CD4-positive, alpha-beta memory T cell (primary cell): ENCODE measurements at regions of chr9 and their contacts with region 1.

Region 1: DNA sequence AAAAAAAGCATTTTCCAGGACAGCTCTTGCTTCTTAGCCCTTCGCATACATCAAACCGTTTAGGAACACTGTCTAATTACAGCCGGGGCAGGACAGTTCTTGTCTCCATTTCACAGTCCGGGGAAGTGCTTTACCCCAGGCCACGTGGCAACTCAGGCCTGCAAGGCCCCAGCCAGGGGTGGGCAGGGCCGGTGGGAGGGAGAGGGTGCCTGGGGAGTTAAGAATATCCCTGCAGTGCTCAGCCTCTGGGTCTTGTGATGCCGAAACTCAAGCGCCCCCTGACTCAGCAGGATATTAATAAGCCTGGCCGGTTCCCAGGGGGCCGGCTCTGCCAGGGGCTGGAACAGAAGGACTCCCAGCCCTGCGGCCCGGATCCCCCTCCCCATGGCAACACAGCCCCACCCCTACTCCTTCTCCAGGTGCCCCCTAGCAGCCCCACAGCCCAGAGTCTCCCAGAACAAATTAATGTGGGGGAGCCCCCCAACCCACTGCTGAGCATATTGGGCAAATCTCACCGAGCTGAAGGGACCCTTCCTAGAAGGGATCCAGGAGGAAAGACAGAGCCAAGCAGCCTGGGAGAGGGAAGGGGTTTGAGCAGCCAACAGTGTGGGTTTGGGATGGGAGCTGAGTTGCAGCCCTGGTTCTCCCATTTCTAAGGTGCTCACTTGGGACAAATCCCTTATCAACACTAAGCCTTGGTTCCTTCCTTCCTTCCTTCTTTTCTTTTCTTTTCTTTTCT is 45.3 kb downstream of the PLPP7 start:
- DNase-seq: no peak
- H3K4me3 ChIP-seq: no peak overlapping the region
- H3K4me3 Mint-ChIP-seq: no peak overlapping the region
- H3K27ac ChIP-seq: no peak overlapping the region
- H3K27ac Mint-ChIP-seq: no peak overlapping the region
- H3K4me1 ChIP-seq: peaks cover 4% of the 10 kb centered on the region
- H3K4me1 Mint-ChIP-seq: peaks cover 3 to 5% (median 4%) of the 10 kb centered on the region in 4 donors
- H3K27me3 ChIP-seq: no peaks in the 10 kb centered on the region
- H3K27me3 Mint-ChIP-seq: no peaks in the 10 kb centered on the region

Region 2: DNA sequence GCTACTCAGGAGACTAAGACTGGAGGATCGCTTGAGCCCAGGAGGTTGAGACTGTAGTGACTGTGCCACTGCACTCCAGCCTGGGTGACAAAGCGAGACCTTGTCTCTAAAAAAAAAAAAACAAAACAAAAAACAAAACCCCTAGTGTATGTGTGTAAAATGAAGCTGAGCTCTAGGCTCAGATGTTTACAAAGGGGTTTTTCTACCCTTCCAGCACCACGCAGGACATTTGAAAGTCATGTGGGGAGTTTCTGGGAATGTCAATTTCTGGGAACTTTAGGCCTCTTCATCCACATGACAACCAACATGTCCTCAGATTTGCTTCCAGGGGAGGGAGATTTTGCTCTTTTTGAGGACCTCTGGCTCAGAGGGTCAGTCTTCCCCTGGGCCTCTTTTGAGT is 280.9 kb before region 1 on chr9:
- CTCF ChIA-PET with region 1: interaction called, 10 read pairs
- POLR2A ChIA-PET with region 1: interaction called, 3 read pairs
- intact Hi-C with region 1: no loop called
- DNase-seq: no peak
- H3K4me3 ChIP-seq: no peak overlapping the region
- H3K4me3 Mint-ChIP-seq: no peak overlapping the region
- H3K27ac ChIP-seq: no peak overlapping the region
- H3K27ac Mint-ChIP-seq: no peak overlapping the region
- H3K4me1 ChIP-seq: no peaks in the 10 kb centered on the region
- H3K4me1 Mint-ChIP-seq: no peaks in the 10 kb centered on the region
- H3K27me3 ChIP-seq: peaks cover 4% of the 10 kb centered on the region
- H3K27me3 Mint-ChIP-seq: peaks cover 3 to 7% of the 10 kb centered on the region in 2 donors

Region 3: GRCh38 chr9:131214286-131214856 is 120.4 kb before region 1 on chr9:
- CTCF ChIA-PET with region 1: interaction called, 12 read pairs
- POLR2A ChIA-PET with region 1: no interaction called
- intact Hi-C with region 1: no loop called
- DNase-seq: no peak
- H3K4me3 ChIP-seq: no peak overlapping the region
- H3K4me3 Mint-ChIP-seq: no peak overlapping the region
- H3K27ac ChIP-seq: no peak overlapping the region
- H3K27ac Mint-ChIP-seq: no peak overlapping the region
- H3K4me1 ChIP-seq: no peaks in the 10 kb centered on the region
- H3K4me1 Mint-ChIP-seq: peaks cover 0 to 4% (median 1%) of the 10 kb centered on the region in 4 donors
- H3K27me3 ChIP-seq: no peaks in the 10 kb centered on the region
- H3K27me3 Mint-ChIP-seq: no peaks in the 10 kb centered on the region

Region 4: GRCh38 chr9:131253891-131254491 is 80.8 kb before region 1 on chr9:
- CTCF ChIA-PET with region 1: interaction called, 14 read pairs
- POLR2A ChIA-PET with region 1: interaction called, 19 read pairs
- intact Hi-C with region 1: no loop called
- DNase-seq: no peak
- H3K4me3 ChIP-seq: no peak overlapping the region
- H3K4me3 Mint-ChIP-seq: peak overlapping the region in 7 of 8 donors; percentile 27 to 91 (median 46)
- H3K27ac ChIP-seq: peak overlapping the region; percentile 77
- H3K27ac Mint-ChIP-seq: peak overlapping the region; percentile 57 to 100 (median 72)
- H3K4me1 ChIP-seq: peaks cover 72% of the 10 kb centered on the region
- H3K4me1 Mint-ChIP-seq: peaks cover 27 to 73% (median 50%) of the 10 kb centered on the region in 4 donors
- H3K27me3 ChIP-seq: no peaks in the 10 kb centered on the region
- H3K27me3 Mint-ChIP-seq: no peaks in the 10 kb centered on the region

Region 5: DNA sequence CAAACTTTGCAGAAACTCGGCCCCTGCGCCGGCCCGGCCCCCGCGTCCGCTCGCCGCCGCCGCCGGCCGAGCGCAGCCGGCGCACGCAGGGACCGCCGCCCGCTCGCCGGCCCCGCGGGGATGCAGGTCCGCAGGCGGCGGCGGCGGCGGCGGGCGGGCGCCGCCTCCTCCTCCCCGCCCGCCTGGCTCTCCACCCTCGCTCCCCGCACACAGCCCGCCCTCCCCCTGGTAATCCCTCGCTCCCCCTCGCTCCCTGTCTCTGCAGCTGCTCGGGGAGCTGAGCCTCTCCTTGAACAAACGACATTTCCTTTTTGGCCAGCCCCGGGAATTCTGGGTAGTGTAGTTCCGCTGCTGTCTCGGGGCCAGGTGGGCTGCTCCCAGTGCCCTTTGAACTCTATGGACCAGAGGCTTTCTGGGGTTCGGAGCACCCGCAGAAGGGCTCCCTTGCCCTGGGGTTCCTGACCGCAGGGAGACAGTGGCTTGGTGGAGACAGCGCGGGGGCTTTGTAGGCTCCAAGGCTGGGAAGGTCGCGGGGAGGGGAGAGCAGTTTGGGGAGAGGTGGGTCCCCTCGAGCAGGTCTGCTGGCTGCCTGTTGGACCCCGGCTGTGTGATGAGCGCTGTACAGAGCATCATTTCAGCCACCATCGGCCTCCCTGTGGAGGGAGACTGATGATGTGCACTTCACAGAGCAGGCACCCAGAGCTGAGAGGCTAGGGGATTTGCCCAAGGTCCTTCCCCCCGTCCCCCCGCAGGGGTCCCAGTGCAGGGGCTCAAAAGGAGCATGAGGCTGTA is 56.7 kb before region 1 on chr9:
- CTCF ChIA-PET with region 1: interaction called, 5 read pairs
- POLR2A ChIA-PET with region 1: no interaction called
- intact Hi-C with region 1: loop called (anchors 5 kb)
- DNase-seq: peak; percentile 60 to 78 (median 61)
- H3K4me3 ChIP-seq: peak overlapping the region; percentile 21 to 65
- H3K4me3 Mint-ChIP-seq: peak overlapping the region; percentile 84 to 93 (median 91)
- H3K27ac ChIP-seq: peak overlapping the region; percentile 79
- H3K27ac Mint-ChIP-seq: peak overlapping the region; percentile 92 to 95 (median 94)
- H3K4me1 ChIP-seq: peaks cover 27% of the 10 kb centered on the region
- H3K4me1 Mint-ChIP-seq: peaks cover 22 to 49% (median 25%) of the 10 kb centered on the region in 4 donors
- H3K27me3 ChIP-seq: no peaks in the 10 kb centered on the region
- H3K27me3 Mint-ChIP-seq: peaks cover 2 to 3% of the 10 kb centered on the region in 2 donors

Region 6: GRCh38 chr9:131349881-131350563 is 15.2 kb after region 1 on chr9:
- CTCF ChIA-PET with region 1: interaction called, 12 read pairs
- POLR2A ChIA-PET with region 1: no interaction called
- intact Hi-C with region 1: no loop called
- DNase-seq: peak; percentile 79 to 82 (median 81)
- H3K4me3 ChIP-seq: no peak overlapping the region
- H3K4me3 Mint-ChIP-seq: peak overlapping the region in 4 of 8 donors; percentile 36 to 63 (median 50)
- H3K27ac ChIP-seq: no peak overlapping the region
- H3K27ac Mint-ChIP-seq: peak overlapping the region in 3 of 7 donors; percentile 30 to 91 (median 42)
- H3K4me1 ChIP-seq: peaks cover 9% of the 10 kb centered on the region
- H3K4me1 Mint-ChIP-seq: peaks cover 0 to 12% (median 6%) of the 10 kb centered on the region in 4 donors
- H3K27me3 ChIP-seq: no peaks in the 10 kb centered on the region
- H3K27me3 Mint-ChIP-seq: peaks cover 0 to 4% of the 10 kb centered on the region in 2 donors